Naive thymus-derived CD4-positive, alpha-beta T cell (primary cell): ENCODE measurements at regions of chr1 and their contacts with region 1.

Region 1: GRCh38 chr1:155063550-155064110 is at the start of gene EFNA4:
- DNase-seq: peak; percentile 62 to 87 (median 86)
- ATAC-seq: peak; percentile 93
- H3K4me3 ChIP-seq: peak within 1 kb of the TSS; percentile 76
- H3K4me3 Mint-ChIP-seq: peak within 1 kb of the TSS; percentile 85 to 99 (median 95)
- H3K27ac ChIP-seq: peak within 1 kb of the TSS; percentile 69
- H3K27ac Mint-ChIP-seq: peak within 1 kb of the TSS; percentile 17 to 96 (median 83)
- H3K4me1 ChIP-seq: peaks cover 20 to 21% of the 10 kb centered on the region in 2 donors
- H3K4me1 Mint-ChIP-seq: peaks cover 21 to 42% (median 39%) of the 10 kb centered on the region in 7 donors
- H3K27me3 ChIP-seq: no peaks in the 10 kb centered on the region
- H3K27me3 Mint-ChIP-seq: no peaks in the 10 kb centered on the region
- total RNA-seq, gene EFNA4: 3.9 to 9.4 (median 7.7) TPM

Region 2: GRCh38 chr1:154607609-154608396 is 455.8 kb before region 1 on chr1 and contains the start of gene ADAR:
- CTCF ChIA-PET with region 1: no interaction called
- POLR2A ChIA-PET with region 1: no interaction called
- intact Hi-C with region 1: loop called in 1 of 2 experiments (anchors 5 kb)
- DNase-seq: peak; percentile 67 to 95 (median 90)
- ATAC-seq: peak; percentile 92
- H3K4me3 ChIP-seq: peak within 1 kb of the TSS; percentile 78
- H3K4me3 Mint-ChIP-seq: peak within 1 kb of the TSS; percentile 91 to 100 (median 98)
- H3K27ac ChIP-seq: peak within 1 kb of the TSS; percentile 97
- H3K27ac Mint-ChIP-seq: peak within 1 kb of the TSS; percentile 94 to 99 (median 99)
- H3K4me1 ChIP-seq: peaks cover 40 to 42% of the 10 kb centered on the region in 2 donors
- H3K4me1 Mint-ChIP-seq: peaks cover 63 to 90% (median 75%) of the 10 kb centered on the region in 7 donors
- H3K27me3 ChIP-seq: no peaks in the 10 kb centered on the region
- H3K27me3 Mint-ChIP-seq: no peaks in the 10 kb centered on the region
- total RNA-seq, gene ADAR: 206 to 408 (median 237) TPM

Region 3: GRCh38 chr1:154791292-154792166 is 272.1 kb before region 1 on chr1:
- CTCF ChIA-PET with region 1: no interaction called
- POLR2A ChIA-PET with region 1: no interaction called
- intact Hi-C with region 1: loop called in 1 of 2 experiments (anchors 1 kb)
- DNase-seq: peak; percentile 46 to 94 (median 91)
- ATAC-seq: peak; percentile 99
- H3K4me3 ChIP-seq: peak overlapping the region; percentile 6
- H3K4me3 Mint-ChIP-seq: peak overlapping the region; percentile 63 to 83 (median 78)
- H3K27ac ChIP-seq: peak overlapping the region; percentile 38
- H3K27ac Mint-ChIP-seq: peak overlapping the region; percentile 59 to 95 (median 84)
- H3K4me1 ChIP-seq: peaks cover 22 to 23% of the 10 kb centered on the region in 2 donors
- H3K4me1 Mint-ChIP-seq: peaks cover 18 to 56% (median 40%) of the 10 kb centered on the region in 7 donors
- H3K27me3 ChIP-seq: no peaks in the 10 kb centered on the region
- H3K27me3 Mint-ChIP-seq: peaks cover 0 to 23% (median 0%) of the 10 kb centered on the region in 5 donors

Region 4: GRCh38 chr1:154982897-154983648 is 80.6 kb before region 1 on chr1 and contains the start of gene FLAD1:
- CTCF ChIA-PET with region 1: interaction called, 5 read pairs
- POLR2A ChIA-PET with region 1: interaction called, 4 read pairs
- intact Hi-C with region 1: loop called in 1 of 2 experiments (anchors 1 kb)
- DNase-seq: peak; percentile 71 to 98 (median 95)
- ATAC-seq: peak; percentile 99
- H3K4me3 ChIP-seq: peak within 1 kb of the TSS; percentile 64
- H3K4me3 Mint-ChIP-seq: no peak within 1 kb of the TSS
- H3K27ac ChIP-seq: peak within 1 kb of the TSS; percentile 77
- H3K27ac Mint-ChIP-seq: peak within 1 kb of the TSS in 3 of 9 donors; percentile 38 to 55 (median 41)
- H3K4me1 ChIP-seq: peaks cover 12 to 13% of the 10 kb centered on the region in 2 donors
- H3K4me1 Mint-ChIP-seq: peaks cover 0 to 24% (median 4%) of the 10 kb centered on the region in 7 donors
- H3K27me3 ChIP-seq: no peaks in the 10 kb centered on the region
- H3K27me3 Mint-ChIP-seq: no peaks in the 10 kb centered on the region
- total RNA-seq, gene FLAD1: 24.4 to 50.2 (median 50.0) TPM

Region 5: DNA sequence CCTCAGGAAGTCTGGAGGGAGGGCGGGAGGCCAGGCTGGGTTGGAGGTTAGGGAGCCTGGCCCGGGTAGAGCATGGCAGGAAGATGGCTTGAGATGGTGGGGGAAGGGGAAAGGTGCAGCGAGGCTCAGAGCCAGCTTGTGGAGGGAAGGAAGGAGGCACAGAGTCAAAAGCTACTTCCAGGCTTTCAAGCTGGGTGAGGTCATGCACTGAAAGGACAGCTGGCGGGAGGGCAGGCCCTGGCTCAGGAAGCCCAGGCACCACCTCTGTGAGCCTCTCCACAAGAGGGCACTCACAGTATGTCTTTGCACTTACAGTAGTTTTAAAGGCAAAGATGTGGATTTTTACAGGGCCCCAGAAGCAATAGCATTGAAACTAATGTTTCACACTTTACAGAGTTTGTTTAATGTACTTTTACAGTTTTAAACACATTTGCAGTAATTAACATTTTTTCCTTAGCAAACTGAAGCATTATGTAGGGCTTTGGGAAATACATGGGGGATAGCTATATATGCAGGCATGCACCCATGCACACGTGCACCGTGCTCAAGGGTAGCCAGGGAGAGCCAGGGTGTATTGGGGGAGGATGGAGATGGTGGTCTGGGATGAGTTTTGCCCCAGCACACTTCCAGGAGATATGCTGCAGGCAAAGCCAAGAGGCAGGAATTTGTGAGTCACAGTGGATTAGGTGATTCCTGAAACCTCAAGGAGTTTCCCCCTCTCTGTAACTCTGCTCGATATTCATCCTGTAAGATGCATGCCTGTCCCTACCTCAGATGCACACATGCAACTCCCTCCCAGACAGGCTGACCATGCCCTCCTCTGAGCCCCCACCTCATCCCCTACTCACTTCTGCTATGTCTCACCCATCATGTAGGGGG is 18.6 kb before region 1 on chr1:
- CTCF ChIA-PET with region 1: interaction called, 138 read pairs
- POLR2A ChIA-PET with region 1: interaction called, 7 read pairs
- intact Hi-C with region 1: loop called (anchors 1 kb)
- DNase-seq: peak in 7 of 9 donors; percentile 49 to 70 (median 58)
- ATAC-seq: peak; percentile 96
- H3K4me3 ChIP-seq: no peak overlapping the region
- H3K4me3 Mint-ChIP-seq: no peak overlapping the region
- H3K27ac ChIP-seq: no peak overlapping the region
- H3K27ac Mint-ChIP-seq: peak overlapping the region in 1 of 9 donors; percentile 52
- H3K4me1 ChIP-seq: no peaks in the 10 kb centered on the region
- H3K4me1 Mint-ChIP-seq: peaks cover 4 to 21% (median 14%) of the 10 kb centered on the region in 7 donors
- H3K27me3 ChIP-seq: no peaks in the 10 kb centered on the region
- H3K27me3 Mint-ChIP-seq: peaks cover 0 to 4% (median 0%) of the 10 kb centered on the region in 5 donors

Region 6: GRCh38 chr1:155084722-155085503 is 21.3 kb after region 1 on chr1:
- CTCF ChIA-PET with region 1: interaction called, 131 read pairs
- POLR2A ChIA-PET with region 1: interaction called, 51 read pairs
- intact Hi-C with region 1: loop called (anchors 1 kb)
- DNase-seq: peak; percentile 87 to 96 (median 93)
- ATAC-seq: peak; percentile 86
- H3K4me3 ChIP-seq: peak overlapping the region; percentile 97
- H3K4me3 Mint-ChIP-seq: peak overlapping the region; percentile 88 to 100 (median 94)
- H3K27ac ChIP-seq: peak overlapping the region; percentile 63
- H3K27ac Mint-ChIP-seq: peak overlapping the region; percentile 88 to 98 (median 93)
- H3K4me1 ChIP-seq: peaks cover 51 to 53% of the 10 kb centered on the region in 2 donors
- H3K4me1 Mint-ChIP-seq: peaks cover 24 to 43% (median 41%) of the 10 kb centered on the region in 7 donors
- H3K27me3 ChIP-seq: peaks cover 28 to 31% of the 10 kb centered on the region in 2 donors
- H3K27me3 Mint-ChIP-seq: peaks cover 17 to 41% (median 23%) of the 10 kb centered on the region in 5 donors